ENCODE measurements at regions of chr11 and their contacts with region 1.

Region 1: DNA sequence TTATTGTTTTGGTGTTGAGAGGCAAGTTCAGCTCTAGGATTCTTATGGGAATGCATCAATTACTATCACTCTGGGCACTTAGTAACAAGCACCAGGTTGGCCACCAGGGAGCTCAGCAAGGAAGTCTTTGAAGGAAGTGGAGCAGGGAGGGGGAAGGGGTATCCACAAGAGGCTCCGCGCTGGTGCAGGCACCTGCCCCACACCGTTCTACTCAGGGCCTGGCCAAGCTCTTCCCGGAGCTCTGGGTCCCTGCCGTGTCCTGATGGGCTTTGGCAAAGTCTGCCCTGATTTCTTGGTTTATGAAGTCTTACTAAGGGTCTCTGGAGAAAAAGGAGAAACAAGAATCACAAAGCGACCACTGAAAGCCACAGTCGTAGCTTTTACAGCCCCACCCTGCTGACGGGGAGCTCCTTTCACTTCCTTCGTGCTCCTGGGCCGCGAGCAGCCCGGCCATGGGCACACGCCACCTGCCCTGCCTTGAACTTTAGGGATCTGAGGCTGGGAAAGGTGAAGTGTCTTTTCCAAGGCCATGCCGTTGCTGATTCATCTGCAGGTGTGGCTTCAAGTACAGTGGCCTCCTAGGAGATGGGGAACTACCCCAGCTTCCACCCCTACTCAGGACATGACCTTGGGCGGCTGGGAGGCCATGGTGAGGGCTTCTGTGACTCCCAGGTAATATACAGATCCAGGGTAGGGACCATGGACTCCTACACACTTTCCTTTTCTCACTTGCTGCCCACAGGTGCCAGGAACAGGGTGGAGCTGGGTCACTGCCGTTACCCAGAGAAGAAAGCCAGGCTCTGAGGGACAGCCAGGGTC is 15.9 kb upstream of the LRRC32 start:
- DNase-seq: no peak
- H3K4me3 ChIP-seq: no peak overlapping the region
- H3K27ac ChIP-seq: no peak overlapping the region
- H3K4me1 ChIP-seq: peaks cover 0 to 3% of the 10 kb centered on the region in 2 experiments; a peak in 1 of 4 replicates
- H3K27me3 ChIP-seq: 0 out of 2 replicates have a peak, but pooled peaks cover 5% of the 10 kb centered on the region
- CTCF ChIP-seq: no peak
- EP300 ChIP-seq: no peak
- RAD21 ChIP-seq: no peak

Region 2: GRCh38 chr11:76698321-76699060 is 12.0 kb after region 1 on chr11:
- CTCF ChIA-PET with region 1: interaction called, 15 read pairs
- POLR2A ChIA-PET with region 1: no interaction called
- DNase-seq: no peak
- H3K4me3 ChIP-seq: no peak overlapping the region
- H3K27ac ChIP-seq: no peak overlapping the region
- H3K4me1 ChIP-seq: peaks cover 10 to 17% of the 10 kb centered on the region in 2 experiments; a peak in 3 of 4 replicates
- H3K27me3 ChIP-seq: no peaks in the 10 kb centered on the region
- CTCF ChIP-seq: peak; percentile 52
- EP300 ChIP-seq: no peak
- RAD21 ChIP-seq: no peak

Measured in SK-N-SH (cell line).